Mammary epithelial cell (primary cell): ENCODE measurements at regions of chr5 and their contacts with region 1.

Region 1: DNA sequence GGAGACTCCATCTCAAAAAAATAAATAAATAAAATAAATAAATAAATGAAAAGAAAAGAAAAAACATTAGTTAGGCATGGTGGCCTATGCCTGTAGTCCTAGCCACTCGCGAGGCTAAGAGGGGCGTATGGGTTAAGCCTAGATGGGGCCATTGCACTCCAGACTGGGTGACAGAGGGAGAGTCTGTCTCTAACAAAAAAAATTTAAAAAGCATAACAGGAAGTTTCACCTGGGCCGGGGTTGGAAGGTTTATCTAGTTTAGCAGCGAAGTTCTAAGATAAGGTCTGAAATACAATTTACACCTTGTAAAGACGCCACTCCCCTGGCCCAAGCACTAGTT is 18.0 kb downstream of the ZMAT2 start:
- DNase-seq: no peak
- H3K4me3 ChIP-seq: no peak overlapping the region
- H3K27ac ChIP-seq: no peak overlapping the region
- H3K4me1 ChIP-seq: peaks cover 4% of the 10 kb centered on the region
- H3K27me3 ChIP-seq: no peaks in the 10 kb centered on the region
- CTCF ChIP-seq: no peak

Region 2: DNA sequence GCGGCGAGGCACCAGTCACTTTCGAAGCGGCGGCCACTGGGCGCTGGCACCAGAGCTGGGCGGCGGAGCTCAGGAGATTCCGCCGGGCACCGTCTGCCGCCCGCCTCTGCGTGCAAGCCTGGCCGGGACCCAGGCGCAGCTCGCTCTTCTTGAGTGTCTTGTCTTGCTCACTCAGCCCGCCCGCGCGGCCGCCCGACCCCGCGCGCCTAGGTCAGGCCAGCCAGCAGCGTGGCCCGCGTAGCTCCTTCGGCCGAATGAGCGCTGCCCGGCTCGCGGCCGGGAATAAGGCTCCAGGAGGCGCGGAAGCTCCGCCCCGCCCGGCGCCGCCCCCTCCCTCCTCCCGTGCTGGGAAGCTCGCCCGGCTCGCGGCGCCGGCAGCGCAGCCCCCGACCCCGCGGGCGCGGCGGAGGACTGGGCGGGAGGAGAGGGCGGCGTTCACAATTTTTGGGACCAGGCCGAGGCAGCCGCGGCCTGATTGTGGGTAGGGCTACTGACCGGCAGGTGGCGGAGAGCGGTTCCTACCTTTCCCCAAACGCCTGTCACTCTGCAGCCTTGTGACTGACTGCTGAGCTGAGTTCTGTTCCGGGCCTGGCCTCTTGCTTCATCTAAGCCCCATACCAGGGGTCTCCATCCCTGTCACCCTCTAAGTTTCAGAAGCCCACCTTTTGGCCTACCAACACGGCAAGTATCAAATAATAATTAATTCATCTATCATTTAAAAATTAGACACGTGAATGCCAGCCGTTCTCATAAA is 371.7 kb before region 1 on chr5 and contains the start of gene HBEGF:
- CTCF ChIA-PET with region 1: interaction called, 16 read pairs
- dilution Hi-C with region 1: no loop called
- in situ Hi-C with region 1: no loop called
- intact Hi-C with region 1: no loop called
- DNase-seq: peak; percentile 89
- H3K4me3 ChIP-seq: peak within 1 kb of the TSS; percentile 75 to 83 (median 81)
- H3K27ac ChIP-seq: peak within 1 kb of the TSS; percentile 90
- H3K4me1 ChIP-seq: peaks cover 65% of the 10 kb centered on the region
- H3K27me3 ChIP-seq: no peaks in the 10 kb centered on the region
- CTCF ChIP-seq: peak; percentile 46 to 69
- total RNA-seq, gene HBEGF: 32.5 to 116 TPM

Region 3: GRCh38 chr5:140575309-140575708 is 142.9 kb before region 1 on chr5:
- CTCF ChIA-PET with region 1: interaction called, 4 read pairs
- dilution Hi-C with region 1: no loop called
- in situ Hi-C with region 1: no loop called
- intact Hi-C with region 1: loop called (anchors 1 kb)
- DNase-seq: peak; percentile 45
- H3K4me3 ChIP-seq: no peak overlapping the region
- H3K27ac ChIP-seq: no peak overlapping the region
- H3K4me1 ChIP-seq: no peaks in the 10 kb centered on the region
- H3K27me3 ChIP-seq: no peaks in the 10 kb centered on the region
- CTCF ChIP-seq: peak; percentile 45 to 76

Region 4: DNA sequence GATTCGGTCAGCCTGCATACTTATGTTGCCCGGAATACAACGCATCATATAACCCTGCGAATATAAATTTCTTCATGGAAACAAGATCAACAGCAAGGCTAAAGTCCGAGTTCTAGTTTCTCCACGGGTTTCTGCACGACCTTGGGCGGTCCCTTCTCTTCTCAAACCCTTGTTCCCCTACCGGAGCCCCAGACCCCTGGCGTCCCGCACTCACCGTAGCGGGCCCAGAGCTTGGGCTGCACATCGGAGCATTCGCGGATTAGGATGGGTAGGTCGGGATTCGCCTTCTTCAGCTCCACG is 71.2 kb before region 1 on chr5:
- CTCF ChIA-PET with region 1: no interaction called
- dilution Hi-C with region 1: no loop called
- in situ Hi-C with region 1: no loop called
- intact Hi-C with region 1: loop called (anchors 2 kb)
- DNase-seq: no peak
- H3K4me3 ChIP-seq: peak overlapping the region; percentile 81 to 88 (median 81)
- H3K27ac ChIP-seq: peak overlapping the region; percentile 75
- H3K4me1 ChIP-seq: peaks cover 15% of the 10 kb centered on the region
- H3K27me3 ChIP-seq: no peaks in the 10 kb centered on the region
- CTCF ChIP-seq: no peak

Region 5: DNA sequence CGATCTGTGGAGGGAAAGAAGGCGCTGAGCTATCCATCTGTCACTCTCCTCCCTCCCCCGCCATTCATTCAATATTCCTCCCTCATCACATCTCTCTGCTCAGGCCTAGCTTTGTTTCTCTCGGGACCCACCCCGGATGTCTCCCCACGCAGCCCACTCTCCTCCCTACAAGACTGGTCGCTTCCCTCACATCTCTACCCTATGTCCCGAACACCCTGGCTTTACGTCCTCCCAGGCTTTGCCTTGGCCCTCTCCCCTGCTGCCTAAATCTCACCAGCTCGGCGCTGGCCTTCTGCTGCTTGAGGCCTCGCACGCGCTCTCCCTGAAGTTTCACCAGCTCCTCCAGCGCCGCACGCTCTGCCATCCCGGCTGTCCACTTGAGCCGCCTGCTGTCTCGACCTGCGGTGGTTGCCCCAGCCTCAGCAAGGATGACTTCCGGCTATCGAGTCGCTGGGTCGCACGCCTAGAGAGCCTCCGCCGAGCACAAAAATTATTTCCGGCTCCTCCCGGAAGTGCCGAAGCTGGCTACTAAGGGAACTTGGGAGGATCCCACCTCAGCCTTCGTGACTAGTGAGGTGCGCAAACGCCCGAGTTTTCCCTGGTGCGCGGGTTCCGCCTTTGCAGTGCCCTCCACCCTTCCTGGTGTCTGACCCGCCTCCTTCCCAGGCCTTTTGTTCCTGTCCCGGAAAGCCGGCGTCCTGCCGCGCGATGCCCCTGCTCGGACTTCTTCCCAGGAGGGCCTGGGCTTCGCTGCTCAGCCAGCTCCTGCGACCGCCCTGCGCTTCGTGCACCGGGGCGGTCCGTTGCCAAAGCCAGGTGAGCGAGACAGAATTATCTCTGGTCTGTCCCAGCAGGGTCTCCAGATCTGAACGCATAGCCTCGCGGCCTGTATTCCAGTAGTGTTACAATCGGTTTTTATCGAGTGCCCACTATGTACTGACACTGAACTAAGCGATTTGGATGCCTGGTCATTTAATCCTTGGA is 27.0 kb before region 1 on chr5 and contains the starts of genes HARS1 and HARS2:
- CTCF ChIA-PET with region 1: no interaction called
- dilution Hi-C with region 1: no loop called
- in situ Hi-C with region 1: no loop called
- intact Hi-C with region 1: loop called (anchors 1 kb)
- DNase-seq: peak; percentile 98
- H3K4me3 ChIP-seq: peak within 1 kb of the TSS; percentile 93 to 98 (median 95)
- H3K27ac ChIP-seq: peak within 1 kb of the TSS; percentile 66
- H3K4me1 ChIP-seq: peaks cover 4% of the 10 kb centered on the region
- H3K27me3 ChIP-seq: no peaks in the 10 kb centered on the region
- CTCF ChIP-seq: no peak
- total RNA-seq, gene HARS1: 60.3 to 104 TPM
- total RNA-seq, gene HARS2: 24.8 to 30.4 TPM